Tibial artery (tissue), 4 donors: ENCODE measurements at regions of chr3 and their contacts with region 1.

Region 1: GRCh38 chr3:153161138-153161713 is 800 bp upstream of the RAP2B start:
- DNase-seq: peak; percentile 98
- H3K4me3 ChIP-seq: peak overlapping the region; percentile 71 to 97
- H3K27ac ChIP-seq: peak overlapping the region; percentile 94
- H3K4me1 ChIP-seq: peaks cover 0 to 26% (median 15%) of the 10 kb centered on the region in 4 donors
- H3K27me3 ChIP-seq: no peaks in the 10 kb centered on the region
- CTCF ChIP-seq: peak in 1 of 2 experiments; percentile 22

Region 2: GRCh38 chr3:153052096-153052460 is 109.1 kb before region 1 on chr3:
- intact Hi-C with region 1: loop called (anchors 5 kb)
- DNase-seq: peak in 1 of 2 donors; percentile 77
- H3K4me3 ChIP-seq: no peak overlapping the region
- H3K27ac ChIP-seq: peak overlapping the region; percentile 62 to 66
- H3K4me1 ChIP-seq: peaks cover 0 to 11% (median 4%) of the 10 kb centered on the region in 4 donors
- H3K27me3 ChIP-seq: no peaks in the 10 kb centered on the region
- CTCF ChIP-seq: no peak

Region 3: GRCh38 chr3:153284282-153284938 is 123.2 kb after region 1 on chr3:
- intact Hi-C with region 1: no loop called
- DNase-seq: peak; percentile 80 to 87
- H3K4me3 ChIP-seq: no peak overlapping the region
- H3K27ac ChIP-seq: peak overlapping the region; percentile 50 to 60
- H3K4me1 ChIP-seq: peaks cover 0 to 21% (median 6%) of the 10 kb centered on the region in 4 donors
- H3K27me3 ChIP-seq: no peaks in the 10 kb centered on the region
- CTCF ChIP-seq: no peak